ENCODE measurements at regions of chr15 and their contacts with region 1.

Region 1: DNA sequence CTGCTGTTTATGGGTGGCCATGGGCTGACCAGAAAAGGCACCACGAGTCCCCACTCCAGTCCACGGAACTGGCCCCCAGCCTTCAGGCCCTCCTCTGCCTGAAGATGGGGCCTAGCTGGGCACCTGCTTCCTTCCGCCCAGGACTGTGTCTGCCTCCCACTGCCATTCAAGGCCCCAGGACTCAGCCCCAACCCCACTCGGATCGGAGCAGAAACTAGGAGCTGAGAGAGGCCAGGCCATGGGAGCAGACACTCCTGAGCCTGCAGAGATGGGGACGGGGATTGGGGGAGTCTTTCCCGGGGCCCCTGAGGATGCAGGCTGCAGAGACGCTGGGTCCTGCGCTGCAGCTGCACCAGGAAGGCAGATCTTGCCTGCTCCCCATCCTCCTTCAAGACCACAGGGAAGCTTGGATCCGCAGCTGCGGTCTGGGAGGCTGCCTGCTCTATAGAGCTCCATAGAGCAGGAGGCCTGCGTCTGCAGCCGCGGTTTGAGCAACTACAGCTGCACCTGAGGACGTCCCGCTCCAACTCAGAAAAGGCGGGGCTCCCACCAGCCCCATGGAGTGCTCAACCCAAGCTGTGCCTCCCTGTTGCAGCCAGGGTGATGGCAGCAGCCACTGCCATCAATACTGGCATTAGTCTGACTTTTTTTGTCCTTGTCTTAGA is 383.9 kb upstream of the TMCO5A start:
- DNase-seq: no peak
- ATAC-seq: no peak
- H3K4me3 ChIP-seq: no peak overlapping the region
- H3K27ac ChIP-seq: no peak overlapping the region
- H3K4me1 ChIP-seq: no peaks in the 10 kb centered on the region
- H3K27me3 ChIP-seq: no peaks in the 10 kb centered on the region
- CTCF ChIP-seq: no peak
- POLR2A ChIP-seq: no peak
- RAD21 ChIP-seq: no peak

Region 2: GRCh38 chr15:37503557-37503956 is 46.9 kb before region 1 on chr15:
- CTCF ChIA-PET with region 1: no interaction called
- POLR2A ChIA-PET with region 1: no interaction called
- RAD21 ChIA-PET with region 1: no interaction called
- intact Hi-C with region 1: loop called (anchors 5 kb)
- DNase-seq: no peak
- ATAC-seq: no peak
- H3K4me3 ChIP-seq: no peak overlapping the region
- H3K27ac ChIP-seq: no peak overlapping the region
- H3K4me1 ChIP-seq: no peaks in the 10 kb centered on the region
- H3K27me3 ChIP-seq: no peaks in the 10 kb centered on the region
- CTCF ChIP-seq: no peak
- POLR2A ChIP-seq: no peak
- RAD21 ChIP-seq: no peak

Region 3: DNA sequence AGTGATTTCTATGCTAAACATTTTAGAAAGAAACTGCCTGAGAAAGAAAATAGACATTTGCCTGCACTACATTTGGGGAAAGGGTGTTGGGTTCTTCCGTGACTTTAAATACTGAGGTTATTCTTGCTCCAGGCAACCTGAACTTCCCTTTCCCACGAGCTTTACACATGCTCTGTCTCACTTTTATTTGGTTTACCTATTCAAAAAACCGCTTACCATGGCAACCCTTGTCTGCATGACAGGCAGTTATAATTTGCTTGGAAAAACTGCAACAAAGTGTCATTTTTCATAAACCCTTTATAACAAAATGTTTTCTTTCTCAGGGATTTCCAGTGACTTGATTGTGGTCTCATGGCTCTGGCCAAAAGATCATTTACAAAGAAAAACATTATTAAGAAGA is 33.9 kb before region 1 on chr15:
- CTCF ChIA-PET with region 1: no interaction called
- POLR2A ChIA-PET with region 1: no interaction called
- RAD21 ChIA-PET with region 1: no interaction called
- intact Hi-C with region 1: no loop called
- DNase-seq: no peak
- ATAC-seq: no peak
- H3K4me3 ChIP-seq: no peak overlapping the region
- H3K27ac ChIP-seq: no peak overlapping the region
- H3K4me1 ChIP-seq: no peaks in the 10 kb centered on the region
- H3K27me3 ChIP-seq: 0 out of 2 replicates have a peak, but pooled peaks cover 3% of the 10 kb centered on the region
- CTCF ChIP-seq: no peak
- POLR2A ChIP-seq: no peak
- RAD21 ChIP-seq: no peak

Region 4: GRCh38 chr15:37731146-37731746 is 180.8 kb after region 1 on chr15:
- CTCF ChIA-PET with region 1: no interaction called
- POLR2A ChIA-PET with region 1: no interaction called
- RAD21 ChIA-PET with region 1: no interaction called
- intact Hi-C with region 1: no loop called
- DNase-seq: no peak
- ATAC-seq: no peak
- H3K4me3 ChIP-seq: no peak overlapping the region
- H3K27ac ChIP-seq: no peak overlapping the region
- H3K4me1 ChIP-seq: no peaks in the 10 kb centered on the region
- H3K27me3 ChIP-seq: peaks cover 31% of the 10 kb centered on the region
- CTCF ChIP-seq: no peak
- POLR2A ChIP-seq: no peak
- RAD21 ChIP-seq: no peak

Region 5: GRCh38 chr15:37773111-37773860 is 222.8 kb after region 1 on chr15:
- CTCF ChIA-PET with region 1: no interaction called
- POLR2A ChIA-PET with region 1: no interaction called
- RAD21 ChIA-PET with region 1: no interaction called
- intact Hi-C with region 1: no loop called
- DNase-seq: no peak
- ATAC-seq: no peak
- H3K4me3 ChIP-seq: no peak overlapping the region
- H3K27ac ChIP-seq: no peak overlapping the region
- H3K4me1 ChIP-seq: peaks cover 0 to 5% of the 10 kb centered on the region in 2 experiments; a peak in 1 of 4 replicates
- H3K27me3 ChIP-seq: no peaks in the 10 kb centered on the region
- CTCF ChIP-seq: no peak
- POLR2A ChIP-seq: no peak
- RAD21 ChIP-seq: no peak